ENCODE measurements at regions of chr9 and their contacts with region 1.

Region 1: GRCh38 chr9:74952281-74953151 is at the start of gene C9orf40:
- DNase-seq: peak; percentile 84

Region 2: GRCh38 chr9:73137286-73137899 is 1815.1 kb before region 1 on chr9:
- CTCF ChIA-PET with region 1: interaction called, 12 read pairs
- POLR2A ChIA-PET with region 1: no interaction called
- DNase-seq: peak; percentile 13

Region 3: GRCh38 chr9:74742191-74742790 is 210.2 kb before region 1 on chr9:
- CTCF ChIA-PET with region 1: no interaction called
- POLR2A ChIA-PET with region 1: no interaction called
- DNase-seq: no peak